Activated T-helper 2 cell treated with anti-CD3 and anti-CD28 coated beads, Interferon-gamma antibody, Interleukin-2, Interleukin-4, amounts not matched to agents 10 μg/mL and 5 μg/mL and 100 μg/mL, durations not matched to agents 14 hours and 24 hours and 36 hours (primary cell): ENCODE measurements at regions of chr1 and their contacts with region 1.

Region 1: GRCh38 chr1:84298328-84298683 is 3.2 kb upstream of the SAMD13 start:
- DNase-seq: peak; percentile 32
- H3K4me3 Mint-ChIP-seq: peak overlapping the region; percentile 88
- H3K27ac Mint-ChIP-seq: peak overlapping the region; percentile 77
- H3K4me1 Mint-ChIP-seq: peaks cover 34% of the 10 kb centered on the region
- H3K27me3 Mint-ChIP-seq: peaks cover 8% of the 10 kb centered on the region

Region 2: DNA sequence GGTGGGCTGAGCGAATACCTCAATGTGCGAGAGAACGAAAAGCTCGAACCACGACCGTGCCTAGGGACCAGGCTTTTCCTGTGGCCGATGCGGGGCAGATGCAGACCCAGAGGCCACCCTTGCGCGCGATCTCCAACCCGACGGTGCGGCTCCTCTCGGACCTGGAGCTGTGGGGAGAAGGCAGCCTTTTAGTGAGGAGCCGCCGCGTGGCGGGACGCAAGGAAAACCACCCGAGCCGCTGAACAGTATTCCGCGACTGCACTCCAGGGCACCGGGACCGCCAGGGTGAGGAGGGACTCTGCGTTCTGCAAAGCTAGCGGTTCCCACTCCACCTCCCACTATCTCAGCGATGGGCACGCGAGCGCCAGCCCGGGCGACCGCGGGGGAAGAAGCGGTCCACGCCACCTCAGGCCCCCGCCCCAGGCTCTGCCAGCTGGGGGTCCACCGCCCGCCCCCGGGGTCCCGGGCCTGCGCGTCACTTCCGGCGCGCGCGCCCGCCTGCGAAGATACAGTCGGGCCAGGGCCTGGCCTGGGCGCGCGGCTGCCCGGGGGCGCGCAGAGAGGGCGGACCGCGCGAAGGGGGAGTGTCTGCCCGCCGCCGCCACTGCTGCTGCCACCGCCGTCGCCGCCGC is 220.7 kb before region 1 on chr1:
- intact Hi-C with region 1: loop called (anchors 5 kb)
- DNase-seq: peak; percentile 70
- H3K4me3 Mint-ChIP-seq: peak overlapping the region; percentile 84
- H3K27ac Mint-ChIP-seq: peak overlapping the region; percentile 59
- H3K4me1 Mint-ChIP-seq: peaks cover 13% of the 10 kb centered on the region
- H3K27me3 Mint-ChIP-seq: peaks cover 6% of the 10 kb centered on the region

Region 3: DNA sequence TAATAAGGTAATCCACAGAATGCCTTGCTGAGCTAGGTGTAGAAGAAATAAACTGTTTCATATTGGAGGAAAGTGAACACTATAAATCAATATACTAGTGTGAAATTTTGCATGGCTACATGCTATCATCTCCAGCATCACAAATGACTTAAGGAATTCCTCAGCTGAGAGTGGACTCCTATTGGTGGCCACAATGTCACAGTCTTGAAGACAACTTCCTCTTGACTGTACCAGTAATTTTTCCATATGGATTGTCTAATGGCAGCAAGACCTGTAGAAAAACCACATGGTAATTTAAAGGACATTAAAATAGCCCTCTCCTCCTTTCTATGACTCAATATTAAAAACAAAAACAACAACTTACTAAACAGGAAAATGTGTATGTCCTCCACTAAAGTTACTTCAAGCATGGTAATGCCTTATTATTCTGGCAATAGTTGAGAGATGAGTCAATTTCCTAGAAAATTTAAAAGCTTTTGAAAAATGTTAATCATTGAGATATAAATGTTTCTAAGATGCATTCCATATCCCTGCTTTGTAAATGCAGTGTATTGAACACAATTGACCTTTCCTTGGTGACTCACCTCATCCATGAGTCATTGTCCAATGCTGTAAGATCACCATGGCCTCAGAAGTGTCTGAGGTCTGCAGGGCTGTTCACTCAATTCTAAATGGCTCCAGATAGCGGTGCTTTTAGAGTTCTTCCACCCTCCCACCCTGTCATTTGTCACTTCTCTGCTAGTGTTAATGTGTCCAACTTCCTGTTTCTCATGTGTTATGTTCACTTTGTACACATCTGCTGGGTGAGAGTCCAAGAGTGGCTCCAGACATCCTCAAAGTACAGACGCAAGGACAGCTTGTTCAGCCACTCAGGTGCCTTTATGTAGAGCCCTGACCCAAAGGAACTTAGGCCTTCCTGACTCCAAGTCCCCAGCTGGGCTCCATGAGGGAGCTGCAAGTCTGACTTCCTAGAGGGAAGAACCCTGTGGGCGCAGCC is 67.2 kb after region 1 on chr1:
- intact Hi-C with region 1: loop called (anchors 5 kb)
- DNase-seq: no peak
- H3K4me3 Mint-ChIP-seq: no peak overlapping the region
- H3K27ac Mint-ChIP-seq: peak overlapping the region; percentile 48
- H3K4me1 Mint-ChIP-seq: peaks cover 7% of the 10 kb centered on the region
- H3K27me3 Mint-ChIP-seq: no peaks in the 10 kb centered on the region

Region 4: GRCh38 chr1:84433258-84434080 is 135.2 kb after region 1 on chr1:
- intact Hi-C with region 1: loop called (anchors 5 kb)
- DNase-seq: peak; percentile 54
- H3K4me3 Mint-ChIP-seq: peak overlapping the region; percentile 18
- H3K27ac Mint-ChIP-seq: no peak overlapping the region
- H3K4me1 Mint-ChIP-seq: peaks cover 3% of the 10 kb centered on the region
- H3K27me3 Mint-ChIP-seq: no peaks in the 10 kb centered on the region

Region 5: GRCh38 chr1:84506002-84506728 is 207.9 kb after region 1 on chr1 and contains the starts of genes GNG5 and SPATA1:
- intact Hi-C with region 1: loop called (anchors 10 kb)
- DNase-seq: peak; percentile 97
- H3K4me3 Mint-ChIP-seq: peak within 1 kb of the TSS; percentile 100
- H3K27ac Mint-ChIP-seq: peak within 1 kb of the TSS; percentile 99
- H3K4me1 Mint-ChIP-seq: peaks cover 26% of the 10 kb centered on the region
- H3K27me3 Mint-ChIP-seq: no peaks in the 10 kb centered on the region
- total RNA-seq, gene GNG5: 118 and 126 TPM in 2 replicates
- total RNA-seq, gene SPATA1: 1.4 and 1.5 TPM in 2 replicates

Region 6: DNA sequence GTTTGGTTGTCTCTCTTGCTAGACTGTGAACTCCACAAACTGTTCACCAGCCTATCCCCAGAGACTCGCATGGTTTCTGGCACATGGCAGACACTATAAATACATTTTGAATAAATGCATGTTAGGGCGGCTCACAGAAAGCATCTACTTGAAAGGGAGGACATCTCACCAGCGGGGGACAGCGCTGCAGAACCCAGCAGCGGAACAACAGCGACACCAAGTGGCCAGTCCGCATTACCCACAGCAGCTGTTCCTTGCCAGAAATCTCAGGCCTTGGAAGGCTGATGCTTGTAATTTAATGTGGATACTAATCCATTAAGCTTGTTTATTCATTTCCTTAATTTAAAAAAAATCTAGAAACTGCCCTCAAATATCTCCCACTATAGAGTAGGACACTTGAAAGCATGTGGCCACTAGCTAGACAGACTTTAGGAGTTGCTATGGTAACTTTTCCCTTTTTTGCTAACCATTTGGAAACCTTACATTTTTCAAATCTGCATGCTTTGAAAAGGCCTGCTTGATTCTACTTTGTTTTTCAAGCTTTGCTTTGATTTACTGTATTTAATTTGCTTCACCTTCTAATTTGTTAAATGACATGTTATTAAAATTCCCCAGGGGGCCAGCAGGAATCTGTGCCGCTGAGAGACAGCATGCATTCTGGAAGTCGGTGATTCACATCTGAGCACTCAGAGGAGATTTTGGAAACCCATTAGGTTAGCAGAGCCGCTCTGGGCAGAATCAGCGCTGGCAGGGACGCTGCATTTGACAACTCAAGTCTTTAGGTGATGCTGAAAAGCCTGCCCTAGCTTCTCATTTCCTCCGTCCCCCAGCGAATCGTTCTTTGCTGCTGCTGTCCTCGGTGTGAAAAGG is 455.4 kb after region 1 on chr1:
- intact Hi-C with region 1: loop called (anchors 10 kb)
- DNase-seq: peak; percentile 64
- H3K4me3 Mint-ChIP-seq: no peak overlapping the region
- H3K27ac Mint-ChIP-seq: no peak overlapping the region
- H3K4me1 Mint-ChIP-seq: peaks cover 7% of the 10 kb centered on the region
- H3K27me3 Mint-ChIP-seq: peaks cover 8% of the 10 kb centered on the region